Activated CD8-positive, alpha-beta memory T cell treated with anti-CD3 and anti-CD28 coated beads, Interleukin-2, amount 10 ng/mL, durations not matched to agents 7 days and 5 days (primary cell): ENCODE measurements at regions of chr16 and their contacts with region 1.

Region 1: DNA sequence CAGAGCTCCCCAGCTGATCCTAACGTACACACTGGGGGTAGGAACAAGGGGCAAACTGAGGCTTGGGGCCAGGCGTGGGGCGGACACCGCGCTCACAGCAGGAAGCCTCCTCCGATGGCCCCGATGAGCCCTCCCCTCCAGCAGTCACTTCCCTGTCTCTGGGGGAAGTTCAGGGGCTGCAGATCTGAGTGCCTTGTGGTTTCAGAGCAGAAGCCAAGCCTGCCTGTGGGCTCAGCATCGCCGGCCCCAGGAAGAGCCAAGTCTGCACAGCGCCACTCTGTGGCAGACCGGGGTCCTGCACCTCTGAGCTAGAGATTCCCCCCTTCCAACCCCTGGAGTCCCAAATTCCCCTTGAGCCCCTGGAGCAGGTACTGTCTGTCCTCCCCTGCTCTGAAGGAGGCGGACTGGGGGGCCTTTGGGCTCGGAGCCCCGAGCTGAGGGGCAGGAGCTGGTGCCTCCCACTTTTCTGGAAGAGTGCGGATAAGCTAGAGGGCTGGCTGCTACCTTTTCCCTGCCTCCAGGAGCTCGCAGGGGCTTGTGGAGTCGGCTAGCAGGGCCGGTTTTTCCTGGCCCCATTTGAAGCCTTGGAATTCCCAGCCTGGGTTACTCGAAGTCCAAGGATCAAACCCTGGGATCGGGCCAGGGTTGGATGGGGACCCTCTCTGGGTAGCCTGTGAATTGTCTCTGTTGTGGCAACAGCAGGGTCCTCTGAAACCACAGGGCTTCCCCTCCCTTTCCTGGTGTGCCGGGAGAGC is 2.9 kb downstream of the GSE1 start:
- DNase-seq: peak; percentile 94
- ATAC-seq: peak; percentile 52
- H3K4me3 Mint-ChIP-seq: peak overlapping the region; percentile 66
- H3K27ac Mint-ChIP-seq: peak overlapping the region; percentile 80
- H3K4me1 Mint-ChIP-seq: peaks cover 26% of the 10 kb centered on the region
- H3K27me3 Mint-ChIP-seq: no peaks in the 10 kb centered on the region

Region 2: GRCh38 chr16:85437166-85438055 is 178.6 kb before region 1 on chr16:
- CTCF ChIA-PET with region 1: interaction called, 13 read pairs
- DNase-seq: no peak
- ATAC-seq: no peak
- H3K4me3 Mint-ChIP-seq: no peak overlapping the region
- H3K27ac Mint-ChIP-seq: no peak overlapping the region
- H3K4me1 Mint-ChIP-seq: no peaks in the 10 kb centered on the region
- H3K27me3 Mint-ChIP-seq: no peaks in the 10 kb centered on the region

Region 3: DNA sequence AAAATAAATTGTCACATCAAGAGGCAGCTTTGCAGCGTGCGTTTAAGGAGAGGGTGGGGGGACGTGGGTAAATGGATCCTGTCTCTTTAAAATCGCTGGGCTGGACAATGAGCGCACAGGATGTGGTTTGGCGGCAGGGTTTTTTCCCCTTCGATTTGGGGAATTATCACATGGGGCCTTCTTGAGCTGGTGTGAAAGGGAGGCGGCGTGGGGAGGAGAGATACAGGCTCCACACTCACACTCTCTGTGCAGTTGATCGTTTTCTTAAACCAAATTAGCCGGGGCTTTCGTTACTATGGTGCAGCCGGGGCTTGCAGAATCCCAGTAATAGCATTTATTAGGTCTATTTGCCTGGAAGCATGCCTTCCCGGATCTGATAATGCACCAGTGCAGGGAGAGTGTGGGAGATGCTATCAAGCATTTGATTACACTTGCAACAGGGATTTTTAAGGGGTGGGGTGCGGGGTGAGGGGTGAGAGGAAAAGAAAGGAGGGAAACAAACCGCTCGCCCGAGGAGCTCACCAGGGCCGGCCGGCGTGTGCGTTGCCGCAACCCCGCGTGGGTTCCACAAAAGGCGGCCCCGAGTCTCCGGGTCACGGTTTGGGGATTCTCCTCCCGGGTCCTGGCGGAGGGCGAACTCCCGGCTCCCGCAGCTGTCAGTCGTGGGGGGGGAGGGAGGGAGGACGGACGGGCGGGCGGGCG is 61.8 kb before region 1 on chr16:
- CTCF ChIA-PET with region 1: interaction called, 83 read pairs
- DNase-seq: peak; percentile 94
- ATAC-seq: peak; percentile 56
- H3K4me3 Mint-ChIP-seq: peak overlapping the region; percentile 88
- H3K27ac Mint-ChIP-seq: peak overlapping the region; percentile 96
- H3K4me1 Mint-ChIP-seq: peaks cover 45% of the 10 kb centered on the region
- H3K27me3 Mint-ChIP-seq: no peaks in the 10 kb centered on the region

Region 4: GRCh38 chr16:85626191-85626981 is 10.4 kb after region 1 on chr16:
- CTCF ChIA-PET with region 1: interaction called, 30 read pairs
- DNase-seq: no peak
- ATAC-seq: no peak
- H3K4me3 Mint-ChIP-seq: no peak overlapping the region
- H3K27ac Mint-ChIP-seq: peak overlapping the region; percentile 43
- H3K4me1 Mint-ChIP-seq: peaks cover 21% of the 10 kb centered on the region
- H3K27me3 Mint-ChIP-seq: no peaks in the 10 kb centered on the region

Region 5: DNA sequence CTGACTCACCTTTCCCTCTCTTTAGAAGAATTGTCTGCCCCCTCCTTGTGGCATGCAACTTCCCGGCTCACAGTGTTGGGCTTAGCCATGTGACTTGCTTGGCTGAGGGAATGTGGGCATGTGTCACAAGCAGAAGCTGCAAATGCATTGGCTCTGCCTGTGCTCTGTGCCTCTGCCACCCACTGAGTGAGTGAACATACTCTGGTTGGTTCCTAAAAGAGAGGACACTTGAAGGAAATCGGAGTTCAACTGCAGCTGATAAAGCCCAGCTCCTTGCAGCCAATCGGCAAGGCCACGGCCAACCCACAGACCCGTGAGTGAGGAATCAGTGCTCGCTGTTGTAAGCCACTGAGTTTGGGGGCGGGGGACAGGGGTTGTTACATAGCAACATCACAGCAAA is 83.6 kb after region 1 on chr16:
- CTCF ChIA-PET with region 1: no interaction called
- DNase-seq: no peak
- ATAC-seq: no peak
- H3K4me3 Mint-ChIP-seq: no peak overlapping the region
- H3K27ac Mint-ChIP-seq: no peak overlapping the region
- H3K4me1 Mint-ChIP-seq: no peaks in the 10 kb centered on the region
- H3K27me3 Mint-ChIP-seq: peaks cover 14% of the 10 kb centered on the region